OCI-LY7 (cell line): ENCODE measurements at regions of chr12 and their contacts with region 1.

Region 1: GRCh38 chr12:31589904-31590641 is 863 bp downstream of the DENND5B start:
- DNase-seq: peak; percentile 81
- H3K4me3 ChIP-seq: peak overlapping the region; percentile 89
- H3K27ac ChIP-seq: peak overlapping the region; percentile 72
- H3K4me1 ChIP-seq: peaks cover 55% of the 10 kb centered on the region
- CTCF ChIP-seq: peak; percentile 54

Region 2: GRCh38 chr12:30296486-30296885 is 1293.6 kb before region 1 on chr12:
- CTCF ChIA-PET with region 1: no interaction called
- POLR2A ChIA-PET with region 1: no interaction called
- intact Hi-C with region 1: no loop called
- DNase-seq: no peak
- H3K4me3 ChIP-seq: no peak overlapping the region
- H3K27ac ChIP-seq: no peak overlapping the region
- H3K4me1 ChIP-seq: no peaks in the 10 kb centered on the region
- CTCF ChIP-seq: no peak

Region 3: DNA sequence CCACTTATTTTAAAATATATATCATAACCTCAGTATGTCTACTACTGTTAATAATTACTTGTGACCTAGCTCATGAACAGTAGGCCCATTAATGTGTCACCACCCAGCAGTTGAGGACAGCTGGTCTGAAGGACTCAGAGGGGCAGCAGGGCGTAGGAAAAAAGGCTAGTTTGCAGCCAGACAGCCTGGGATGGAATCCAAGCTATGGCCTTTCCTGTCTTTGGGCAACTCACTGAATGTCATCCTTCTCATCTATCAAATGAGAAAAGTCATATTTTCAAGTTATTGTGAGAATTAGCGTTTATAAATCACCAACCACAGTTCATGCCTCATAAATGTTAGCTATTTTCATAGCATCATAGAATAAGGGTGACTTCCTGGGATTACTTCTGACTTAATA is 11.4 kb before region 1 on chr12:
- CTCF ChIA-PET with region 1: no interaction called
- POLR2A ChIA-PET with region 1: interaction called, 42 read pairs
- intact Hi-C with region 1: no loop called
- DNase-seq: no peak
- H3K4me3 ChIP-seq: no peak overlapping the region
- H3K27ac ChIP-seq: no peak overlapping the region
- H3K4me1 ChIP-seq: peaks cover 26% of the 10 kb centered on the region
- CTCF ChIP-seq: no peak

Region 4: GRCh38 chr12:31603546-31604009 is 13.5 kb after region 1 on chr12:
- CTCF ChIA-PET with region 1: no interaction called
- POLR2A ChIA-PET with region 1: interaction called, 15 read pairs
- intact Hi-C with region 1: loop called (anchors 1 kb)
- DNase-seq: peak; percentile 92
- H3K4me3 ChIP-seq: peak overlapping the region; percentile 42
- H3K27ac ChIP-seq: peak overlapping the region; percentile 96
- H3K4me1 ChIP-seq: peaks cover 69% of the 10 kb centered on the region
- CTCF ChIP-seq: no peak

Region 5: DNA sequence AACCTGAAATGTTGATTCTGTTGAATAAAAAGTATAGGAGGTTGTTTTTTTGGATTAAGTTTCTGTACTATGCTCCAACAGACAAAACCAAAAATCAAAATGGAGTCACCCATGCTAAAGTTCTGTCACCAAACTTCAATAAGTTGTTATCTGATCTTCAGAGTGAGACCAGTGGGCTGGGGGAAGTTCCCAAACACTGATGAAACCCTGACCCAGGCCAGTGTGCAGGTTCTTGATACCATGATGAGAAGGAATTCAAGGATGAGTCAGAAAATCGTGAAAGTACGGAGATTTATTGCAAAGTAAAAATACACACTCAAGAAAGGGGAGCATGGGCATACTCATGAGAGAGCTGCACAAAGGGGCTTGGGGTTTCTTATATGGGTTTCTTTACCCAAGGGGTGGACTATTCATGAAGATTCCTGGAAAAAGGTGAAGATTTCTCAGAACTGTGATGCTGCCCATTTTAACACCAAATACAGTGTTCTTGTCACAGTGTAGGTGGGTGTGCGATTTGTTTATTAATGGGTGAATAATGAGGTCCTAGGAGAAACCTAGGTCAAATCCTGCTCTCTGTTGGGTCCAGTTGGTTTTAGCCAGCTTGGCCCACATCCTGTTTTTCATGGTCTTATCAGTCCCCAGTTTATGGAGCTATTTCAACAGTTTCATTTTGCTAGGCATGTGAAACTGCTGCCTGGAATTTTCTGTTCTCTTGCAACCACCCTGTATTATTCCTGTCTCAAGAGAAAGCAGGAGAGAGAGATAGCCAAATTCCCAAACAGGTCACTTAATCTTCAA is 28.4 kb after region 1 on chr12:
- CTCF ChIA-PET with region 1: no interaction called
- POLR2A ChIA-PET with region 1: no interaction called
- intact Hi-C with region 1: no loop called
- DNase-seq: no peak
- H3K4me3 ChIP-seq: no peak overlapping the region
- H3K27ac ChIP-seq: no peak overlapping the region
- H3K4me1 ChIP-seq: no peaks in the 10 kb centered on the region
- CTCF ChIP-seq: no peak

Region 6: DNA sequence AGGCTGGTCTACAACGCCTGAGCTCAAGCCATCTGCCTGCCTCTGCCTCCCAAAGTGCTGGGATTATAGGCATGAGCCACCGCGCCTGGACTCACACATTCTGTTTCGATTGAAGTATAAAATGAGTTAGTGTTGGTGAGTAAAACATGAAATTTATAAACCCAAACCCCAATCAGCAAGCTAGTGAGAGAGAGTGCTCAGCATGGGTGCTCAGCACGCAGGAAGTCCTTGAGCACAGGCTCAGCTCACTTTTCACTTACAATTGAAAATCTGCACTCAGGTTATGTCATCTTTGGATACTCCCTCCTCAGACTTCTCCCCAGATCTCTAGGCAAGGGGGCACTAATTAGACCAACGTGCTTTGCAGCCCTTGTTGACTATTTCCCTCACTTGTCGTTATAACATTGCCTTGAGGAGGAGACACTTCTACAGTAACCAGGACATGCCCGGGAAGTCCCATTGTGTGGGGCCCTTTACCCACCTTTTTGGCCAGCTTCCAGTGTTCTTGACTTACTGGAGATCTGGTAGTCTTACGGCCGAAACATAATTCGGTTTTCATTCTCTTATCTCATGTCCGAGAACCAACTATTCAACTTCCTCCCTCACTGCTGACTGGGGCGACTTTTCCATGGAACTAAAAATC is 207.3 kb after region 1 on chr12:
- CTCF ChIA-PET with region 1: no interaction called
- POLR2A ChIA-PET with region 1: no interaction called
- intact Hi-C with region 1: no loop called
- DNase-seq: no peak
- H3K4me3 ChIP-seq: no peak overlapping the region
- H3K27ac ChIP-seq: no peak overlapping the region
- H3K4me1 ChIP-seq: no peaks in the 10 kb centered on the region
- CTCF ChIP-seq: no peak